H1 (cell line): ENCODE measurements at regions of chr12 and their contacts with region 1.

Region 1: GRCh38 chr12:56098592-56098991 is 5.8 kb upstream of the PA2G4 start:
- DNase-seq: no peak
- H3K4me3 ChIP-seq: no peak overlapping the region
- H3K27ac ChIP-seq: no peak overlapping the region
- H3K4me1 ChIP-seq: no peaks in the 10 kb centered on the region
- H3K27me3 ChIP-seq: no peaks in the 10 kb centered on the region
- CTCF ChIP-seq: no peak
- EP300 ChIP-seq: no peak
- POLR2A ChIP-seq: no peak
- RAD21 ChIP-seq: no peak

Region 2: GRCh38 chr12:55416961-55417360 is 681.6 kb before region 1 on chr12:
- CTCF ChIA-PET with region 1: no interaction called
- POLR2A ChIA-PET with region 1: no interaction called
- DNase-seq: no peak
- H3K4me3 ChIP-seq: no peak overlapping the region
- H3K27ac ChIP-seq: no peak overlapping the region
- H3K4me1 ChIP-seq: no peaks in the 10 kb centered on the region
- H3K27me3 ChIP-seq: no peaks in the 10 kb centered on the region
- CTCF ChIP-seq: no peak
- EP300 ChIP-seq: no peak
- POLR2A ChIP-seq: no peak
- RAD21 ChIP-seq: no peak

Region 3: DNA sequence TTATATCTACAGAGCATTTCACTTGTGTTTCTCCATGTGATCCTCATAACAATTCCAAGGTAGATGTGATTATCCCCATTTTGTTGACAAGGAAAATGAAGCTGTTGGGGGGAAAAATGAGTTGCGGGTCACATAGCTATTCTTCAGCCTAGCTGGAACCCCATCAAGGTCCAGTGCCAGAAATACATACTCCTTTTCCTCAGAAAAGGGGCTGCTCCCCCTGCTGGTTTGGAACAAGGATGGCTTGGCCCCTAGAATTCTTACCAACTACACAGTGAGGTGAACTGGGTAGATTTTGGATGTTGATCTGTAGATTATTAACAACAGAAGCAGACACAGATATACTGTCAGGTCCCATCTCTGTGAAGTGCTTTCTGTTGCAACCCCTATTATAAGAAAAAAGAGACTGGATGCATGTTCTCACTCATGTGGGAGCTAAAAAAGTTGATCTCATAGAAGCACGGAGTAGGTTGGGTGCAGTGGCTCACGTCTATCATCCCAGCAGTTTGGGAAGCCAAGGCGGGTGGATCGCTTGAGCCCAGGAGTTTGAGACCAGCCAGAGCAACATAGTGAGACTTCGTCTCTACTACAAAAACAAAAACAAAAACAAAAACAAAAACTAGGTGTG is 68.8 kb before region 1 on chr12:
- CTCF ChIA-PET with region 1: no interaction called
- POLR2A ChIA-PET with region 1: no interaction called
- DNase-seq: peak in 1 of 2 experiments; percentile 52
- H3K4me3 ChIP-seq: no peak overlapping the region
- H3K27ac ChIP-seq: no peak overlapping the region
- H3K4me1 ChIP-seq: no peaks in the 10 kb centered on the region
- H3K27me3 ChIP-seq: no peaks in the 10 kb centered on the region
- CTCF ChIP-seq: peak; percentile 37 to 74 (median 66)
- EP300 ChIP-seq: no peak
- POLR2A ChIP-seq: no peak
- RAD21 ChIP-seq: peak; percentile 59 to 68

Region 4: DNA sequence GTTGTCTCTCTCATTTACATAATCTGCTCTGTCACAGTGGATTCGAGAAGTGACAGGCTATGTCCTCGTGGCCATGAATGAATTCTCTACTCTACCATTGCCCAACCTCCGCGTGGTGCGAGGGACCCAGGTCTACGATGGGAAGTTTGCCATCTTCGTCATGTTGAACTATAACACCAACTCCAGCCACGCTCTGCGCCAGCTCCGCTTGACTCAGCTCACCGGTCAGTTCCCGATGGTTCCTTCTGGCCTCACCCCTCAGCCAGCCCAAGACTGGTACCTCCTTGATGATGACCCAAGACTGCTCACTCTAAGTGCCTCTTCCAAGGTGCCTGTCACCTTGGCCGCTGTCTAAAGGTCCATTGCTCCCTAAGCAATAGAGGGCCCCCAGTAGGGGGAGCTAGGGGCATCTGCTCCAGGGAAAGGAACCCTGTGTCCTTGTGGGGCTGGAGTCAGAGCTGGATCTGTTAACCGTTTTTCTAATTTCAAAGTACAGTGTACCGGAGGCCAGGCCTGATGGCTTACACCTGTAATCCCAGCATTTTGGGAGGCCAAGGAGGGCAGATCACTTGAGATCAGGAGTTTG is 13.5 kb before region 1 on chr12:
- CTCF ChIA-PET with region 1: interaction called, 38 read pairs
- POLR2A ChIA-PET with region 1: interaction called, 112 read pairs
- DNase-seq: peak in 1 of 2 experiments; percentile 75
- H3K4me3 ChIP-seq: no peak overlapping the region
- H3K27ac ChIP-seq: no peak overlapping the region
- H3K4me1 ChIP-seq: peaks cover 3 to 13% (median 10%) of the 10 kb centered on the region in 4 experiments
- H3K27me3 ChIP-seq: no peaks in the 10 kb centered on the region
- CTCF ChIP-seq: peak; percentile 73 to 80 (median 75)
- EP300 ChIP-seq: no peak
- POLR2A ChIP-seq: no peak
- RAD21 ChIP-seq: peak; percentile 43 to 59

Region 5: GRCh38 chr12:56206457-56207166 is 108.0 kb after region 1 on chr12:
- CTCF ChIA-PET with region 1: no interaction called
- POLR2A ChIA-PET with region 1: no interaction called
- DNase-seq: peak in 1 of 2 experiments; percentile 84
- H3K4me3 ChIP-seq: no peak overlapping the region
- H3K27ac ChIP-seq: no peak overlapping the region
- H3K4me1 ChIP-seq: no peaks in the 10 kb centered on the region
- H3K27me3 ChIP-seq: no peaks in the 10 kb centered on the region
- CTCF ChIP-seq: peak; percentile 78 to 91 (median 85)
- EP300 ChIP-seq: no peak
- POLR2A ChIP-seq: 0 out of 3 replicates have a peak, but pooled peaks of 1 of the 2 experiments have one; percentile 5
- RAD21 ChIP-seq: peak; percentile 68 to 74

Region 6: GRCh38 chr12:56234746-56235436 is 136.3 kb after region 1 on chr12:
- CTCF ChIA-PET with region 1: no interaction called
- POLR2A ChIA-PET with region 1: no interaction called
- DNase-seq: no peak
- H3K4me3 ChIP-seq: no peak overlapping the region
- H3K27ac ChIP-seq: no peak overlapping the region
- H3K4me1 ChIP-seq: peaks cover 0 to 10% (median 2%) of the 10 kb centered on the region in 4 experiments; a peak in 4 of 7 replicates
- H3K27me3 ChIP-seq: 0 out of 7 replicates have a peak, but pooled peaks cover 0 to 2% (median 0%) of the 10 kb centered on the region in 4 experiments
- CTCF ChIP-seq: no peak
- EP300 ChIP-seq: no peak
- POLR2A ChIP-seq: no peak
- RAD21 ChIP-seq: no peak